ENCODE measurements at regions of chr16 and their contacts with region 1.

Region 1: GRCh38 chr16:86590501-86591144 is 12.3 kb downstream of the FOXL1 start:
- DNase-seq: no peak
- H3K4me3 ChIP-seq: no peak overlapping the region
- H3K27ac ChIP-seq: no peak overlapping the region
- H3K4me1 ChIP-seq: no peaks in the 10 kb centered on the region
- H3K27me3 ChIP-seq: peaks cover 0 to 45% of the 10 kb centered on the region in 2 donors
- CTCF ChIP-seq: no peak
- POLR2A ChIP-seq: no peak

Region 2: GRCh38 chr16:86549076-86549890 is 41.3 kb before region 1 on chr16:
- intact Hi-C with region 1: no loop called
- DNase-seq: no peak
- H3K4me3 ChIP-seq: no peak overlapping the region
- H3K27ac ChIP-seq: no peak overlapping the region
- H3K4me1 ChIP-seq: peaks cover 0 to 2% of the 10 kb centered on the region in 2 donors
- H3K27me3 ChIP-seq: no peaks in the 10 kb centered on the region
- CTCF ChIP-seq: no peak
- POLR2A ChIP-seq: no peak

Region 3: GRCh38 chr16:86563489-86564345 is 26.9 kb before region 1 on chr16:
- intact Hi-C with region 1: loop called (anchors 1 kb)
- DNase-seq: peak; percentile 89 to 93
- H3K4me3 ChIP-seq: peak overlapping the region in 1 of 3 donors; percentile 44
- H3K27ac ChIP-seq: no peak overlapping the region
- H3K4me1 ChIP-seq: no peaks in the 10 kb centered on the region
- H3K27me3 ChIP-seq: peaks cover 3 to 75% of the 10 kb centered on the region in 2 donors
- CTCF ChIP-seq: peak; percentile 98 to 100 (median 100)
- POLR2A ChIP-seq: no peak

Region 4: DNA sequence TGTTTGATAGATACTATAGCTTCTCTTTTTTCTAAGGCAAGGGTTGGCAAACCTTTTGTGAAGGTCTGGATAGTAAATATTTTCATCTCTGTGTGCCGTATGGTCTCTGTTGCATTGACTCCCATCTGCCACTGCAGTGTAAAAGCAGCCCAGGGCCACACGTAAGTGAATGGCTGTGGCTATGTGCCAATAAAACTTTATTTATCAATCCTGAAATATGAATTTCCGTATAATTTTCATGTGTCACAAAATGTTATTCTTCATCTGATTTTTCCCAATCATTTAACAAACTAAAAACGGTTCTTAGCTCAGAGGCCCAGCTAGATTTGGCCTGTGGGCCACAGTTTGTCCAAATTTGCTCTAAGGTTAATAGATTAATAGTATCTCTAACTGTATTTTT is 10.2 kb after region 1 on chr16:
- intact Hi-C with region 1: loop called (anchors 1 kb)
- DNase-seq: no peak
- H3K4me3 ChIP-seq: no peak overlapping the region
- H3K27ac ChIP-seq: no peak overlapping the region
- H3K4me1 ChIP-seq: no peaks in the 10 kb centered on the region
- H3K27me3 ChIP-seq: peaks cover 0 to 24% of the 10 kb centered on the region in 2 donors
- CTCF ChIP-seq: no peak
- POLR2A ChIP-seq: no peak

Region 5: DNA sequence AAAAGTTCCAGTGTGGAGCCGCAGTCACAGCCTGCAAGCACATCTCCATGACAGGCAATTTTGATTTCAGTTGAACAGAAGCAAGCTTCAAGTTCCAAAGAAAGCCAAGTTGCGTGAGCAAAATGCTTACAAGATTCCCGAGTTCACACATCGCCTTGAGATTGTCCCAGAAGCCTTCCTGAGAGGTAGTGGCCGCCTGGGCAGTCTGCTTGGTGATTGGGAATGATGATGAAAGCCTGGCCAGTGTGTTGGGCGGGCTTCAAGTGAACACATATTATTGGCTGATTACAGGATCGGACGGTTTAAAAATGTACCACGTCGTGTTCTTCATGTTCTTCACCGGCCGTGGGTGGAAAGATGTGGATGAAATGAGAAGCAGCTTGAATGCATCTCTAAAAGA is 173.2 kb after region 1 on chr16:
- intact Hi-C with region 1: loop called (anchors 2 kb)
- DNase-seq: no peak
- H3K4me3 ChIP-seq: no peak overlapping the region
- H3K27ac ChIP-seq: no peak overlapping the region
- H3K4me1 ChIP-seq: no peaks in the 10 kb centered on the region
- H3K27me3 ChIP-seq: peaks cover 3 to 48% of the 10 kb centered on the region in 2 donors
- CTCF ChIP-seq: no peak
- POLR2A ChIP-seq: no peak

Measured in breast epithelium (tissue), 4 donors.